ENCODE measurements at regions of chr17 and their contacts with region 1.

Region 1: DNA sequence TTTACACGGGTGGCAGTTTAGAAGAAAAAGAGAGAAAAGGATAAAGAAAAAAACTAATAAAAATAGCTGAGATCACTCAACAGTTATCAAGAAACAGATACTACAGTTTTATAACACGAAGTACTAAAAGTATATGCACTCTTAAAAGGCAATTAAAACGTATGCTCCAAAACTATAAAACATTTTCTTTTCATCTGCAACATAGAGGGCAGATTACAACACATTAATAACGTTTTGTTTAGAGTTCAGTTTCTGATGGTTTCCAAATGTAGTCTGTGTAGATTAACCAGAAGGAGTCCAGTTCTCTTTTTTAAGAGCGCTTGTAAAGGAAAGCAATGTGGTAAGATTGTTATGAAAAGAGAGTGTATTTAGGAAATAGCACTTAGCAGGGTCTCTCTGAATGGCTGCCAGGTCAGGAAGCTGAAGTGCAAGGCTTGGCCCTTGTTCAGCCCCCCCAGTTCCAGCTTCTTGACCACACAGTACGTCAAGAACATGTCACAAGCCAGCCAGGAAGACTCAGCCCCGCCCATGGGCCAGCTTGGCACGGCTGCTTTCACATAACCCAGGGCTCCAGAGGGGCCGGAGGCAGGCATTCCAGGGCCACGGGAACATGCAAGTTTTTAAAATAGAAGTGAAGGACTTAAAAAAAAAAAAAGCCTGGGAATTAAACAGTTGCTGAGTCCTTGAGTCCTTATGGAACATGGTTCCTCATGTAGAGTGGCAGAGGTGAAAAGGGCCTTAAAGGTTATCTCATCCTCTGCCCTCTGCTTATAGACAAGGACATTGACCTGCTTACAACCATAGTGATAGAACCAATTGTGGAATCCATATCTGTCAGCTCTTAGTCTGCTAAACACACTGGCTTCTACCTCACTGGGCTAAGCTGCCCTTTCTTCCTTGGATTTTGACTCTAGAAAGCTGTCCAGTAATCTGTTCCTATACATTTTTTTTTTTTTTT is 147.4 kb upstream of the TBX2 start:
- DNase-seq: peak; percentile 88 to 92
- ATAC-seq: peak; percentile 92 to 96 (median 95)
- H3K4me3 ChIP-seq: peak overlapping the region in 1 of 10 donors; percentile 2
- H3K27ac ChIP-seq: peak overlapping the region; percentile 34 to 86 (median 72)
- H3K4me1 ChIP-seq: peaks cover 5 to 69% (median 46%) of the 10 kb centered on the region in 9 donors
- H3K27me3 ChIP-seq: no peaks in the 10 kb centered on the region
- CTCF ChIP-seq: no peak

Region 2: DNA sequence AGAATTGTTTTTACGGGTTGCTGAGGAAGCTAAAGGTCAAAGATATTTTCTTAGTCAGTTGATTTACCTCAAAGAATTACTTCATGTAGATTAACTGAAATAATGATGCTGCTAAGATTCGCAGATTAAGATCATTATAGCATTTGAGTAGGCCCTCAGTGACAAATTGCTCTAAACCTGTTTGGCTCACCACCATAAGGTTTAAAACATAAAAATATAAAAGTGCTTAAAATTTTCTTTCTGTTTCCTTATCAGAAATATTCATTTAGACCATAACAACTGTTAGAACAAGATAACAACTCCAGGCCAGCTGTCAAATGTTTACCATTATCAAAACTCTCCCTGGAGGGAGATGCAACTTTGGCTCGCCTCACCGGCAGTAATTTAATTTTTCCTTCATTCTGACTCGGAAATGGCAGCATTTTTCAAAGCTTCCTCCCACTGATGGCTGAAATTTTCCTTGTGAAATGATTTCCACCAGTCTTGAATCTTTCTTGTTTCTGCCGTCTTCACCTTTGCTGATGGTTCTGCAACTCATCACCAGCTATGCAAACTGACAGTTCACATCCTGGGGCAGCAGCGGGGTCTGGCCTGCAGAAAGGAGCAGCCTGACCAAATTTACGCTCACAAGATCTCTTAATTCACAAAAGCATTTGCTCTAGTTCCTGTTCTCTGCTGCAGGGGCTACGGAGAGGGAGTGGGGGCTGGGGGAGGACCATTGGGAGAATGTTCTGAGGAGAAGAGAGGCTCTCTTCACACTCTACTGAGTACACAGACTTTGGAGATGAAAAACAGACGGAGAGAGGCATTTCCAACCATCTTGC is 107.3 kb before region 1 on chr17:
- intact Hi-C with region 1: loop called in 1 of 10 experiments (anchors 10 kb)
- DNase-seq: no peak
- ATAC-seq: peak in 6 of 8 donors; percentile 14 to 77 (median 56)
- H3K4me3 ChIP-seq: no peak overlapping the region
- H3K27ac ChIP-seq: peak overlapping the region in 8 of 10 donors; percentile 6 to 62 (median 34)
- H3K4me1 ChIP-seq: peaks cover 0 to 28% (median 23%) of the 10 kb centered on the region in 9 donors
- H3K27me3 ChIP-seq: no peaks in the 10 kb centered on the region
- CTCF ChIP-seq: no peak

Region 3: DNA sequence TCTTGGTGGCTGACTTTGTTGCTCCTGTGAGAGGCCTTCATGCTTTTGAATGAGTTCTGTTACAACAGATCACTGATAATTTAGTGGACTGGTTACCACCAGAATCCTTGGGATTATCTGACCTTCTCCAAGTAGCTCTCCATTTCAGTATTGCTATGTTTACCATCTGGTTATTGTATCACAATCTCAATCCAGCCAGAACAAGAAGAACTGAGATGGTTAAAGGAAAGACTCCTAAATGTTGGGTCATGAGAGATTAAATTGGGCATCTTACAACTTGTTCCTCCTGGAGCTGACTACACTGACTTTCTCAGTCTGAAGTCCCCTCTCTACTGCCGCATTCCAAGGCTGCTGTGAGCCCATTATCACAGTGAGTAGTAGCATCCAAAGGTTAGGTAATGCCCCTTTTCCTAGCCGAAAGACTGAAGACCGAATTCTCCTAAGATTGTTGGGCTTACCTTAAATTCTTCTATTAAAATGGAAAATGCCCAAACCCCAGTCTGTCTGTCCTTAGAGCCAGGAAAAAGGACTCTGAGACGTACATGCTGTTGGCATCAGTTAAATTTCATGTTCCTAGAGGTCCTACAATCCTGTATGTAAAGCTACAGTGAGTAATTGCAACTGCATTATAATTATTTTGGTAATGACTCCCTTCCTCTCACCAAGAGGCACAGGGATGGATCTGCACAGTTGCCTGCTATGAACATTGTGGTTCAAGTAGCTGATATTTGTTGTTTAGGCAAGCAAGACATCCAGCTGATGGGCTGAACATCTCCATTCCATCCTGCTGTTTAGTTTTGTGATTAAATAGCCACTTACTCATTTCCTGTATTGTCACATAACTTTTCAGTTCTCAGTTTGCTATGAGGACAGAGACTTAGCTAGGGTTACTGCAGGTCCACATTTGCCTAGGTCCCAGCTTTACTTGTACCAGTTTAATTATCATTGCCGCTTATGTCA is 34.1 kb before region 1 on chr17:
- intact Hi-C with region 1: loop called in 1 of 10 experiments (anchors 5 kb)
- DNase-seq: no peak
- ATAC-seq: peak in 4 of 8 donors; percentile 12 to 64 (median 34)
- H3K4me3 ChIP-seq: no peak overlapping the region
- H3K27ac ChIP-seq: peak overlapping the region in 8 of 10 donors; percentile 35 to 71 (median 59)
- H3K4me1 ChIP-seq: peaks cover 0 to 45% (median 6%) of the 10 kb centered on the region in 9 donors
- H3K27me3 ChIP-seq: no peaks in the 10 kb centered on the region
- CTCF ChIP-seq: no peak

Region 4: GRCh38 chr17:61314368-61315078 is 62.3 kb after region 1 on chr17:
- intact Hi-C with region 1: no loop called
- DNase-seq: peak; percentile 50 to 66
- ATAC-seq: peak; percentile 83 to 94 (median 90)
- H3K4me3 ChIP-seq: no peak overlapping the region
- H3K27ac ChIP-seq: peak overlapping the region; percentile 51 to 79 (median 66)
- H3K4me1 ChIP-seq: peaks cover 9 to 34% (median 27%) of the 10 kb centered on the region in 9 donors
- H3K27me3 ChIP-seq: no peaks in the 10 kb centered on the region
- CTCF ChIP-seq: peak in 6 of 9 donors; percentile 10 to 44 (median 21)

Region 5: GRCh38 chr17:61338000-61338798 is 86.0 kb after region 1 on chr17:
- intact Hi-C with region 1: loop called in 1 of 10 experiments (anchors 5 kb)
- DNase-seq: peak in 1 of 2 donors; percentile 36
- ATAC-seq: peak in 6 of 8 donors; percentile 37 to 71 (median 49)
- H3K4me3 ChIP-seq: no peak overlapping the region
- H3K27ac ChIP-seq: peak overlapping the region in 8 of 10 donors; percentile 2 to 76 (median 36)
- H3K4me1 ChIP-seq: peaks cover 5 to 48% (median 35%) of the 10 kb centered on the region in 9 donors
- H3K27me3 ChIP-seq: peaks cover 0 to 3% (median 0%) of the 10 kb centered on the region in 7 donors
- CTCF ChIP-seq: no peak

Region 6: GRCh38 chr17:61399131-61400057 is 147.2 kb after region 1 on chr17 and contains the start of gene TBX2:
- intact Hi-C with region 1: loop called in 4 of 10 experiments (anchors 5 to 10 kb)
- DNase-seq: peak; percentile 84 to 89
- ATAC-seq: peak; percentile 59 to 75 (median 64)
- H3K4me3 ChIP-seq: peak within 1 kb of the TSS; percentile 46 to 81 (median 66)
- H3K27ac ChIP-seq: peak within 1 kb of the TSS; percentile 69 to 88 (median 85)
- H3K4me1 ChIP-seq: peaks cover 15 to 77% (median 54%) of the 10 kb centered on the region in 9 donors
- H3K27me3 ChIP-seq: peaks cover 44 to 96% (median 86%) of the 10 kb centered on the region in 7 donors
- CTCF ChIP-seq: peak in 3 of 9 donors; percentile 10 to 19 (median 13)
- total RNA-seq, gene TBX2: 4.6 to 21.8 (median 10.0) TPM